Sigmoid colon (tissue), 7 donors: ENCODE measurements at regions of chr4 and their contacts with region 1.

Region 1: GRCh38 chr4:144174401-144175067 is 34.0 kb upstream of the GYPA start:
- DNase-seq: no peak
- H3K4me3 ChIP-seq: no peak overlapping the region
- H3K27ac ChIP-seq: no peak overlapping the region
- H3K4me1 ChIP-seq: peaks cover 0 to 4% (median 2%) of the 10 kb centered on the region in 4 donors
- H3K27me3 ChIP-seq: no peaks in the 10 kb centered on the region
- CTCF ChIP-seq: peak in 2 of 4 experiments; percentile 24 to 43
- EP300 ChIP-seq: no peak
- POLR2A ChIP-seq: no peak

Region 2: DNA sequence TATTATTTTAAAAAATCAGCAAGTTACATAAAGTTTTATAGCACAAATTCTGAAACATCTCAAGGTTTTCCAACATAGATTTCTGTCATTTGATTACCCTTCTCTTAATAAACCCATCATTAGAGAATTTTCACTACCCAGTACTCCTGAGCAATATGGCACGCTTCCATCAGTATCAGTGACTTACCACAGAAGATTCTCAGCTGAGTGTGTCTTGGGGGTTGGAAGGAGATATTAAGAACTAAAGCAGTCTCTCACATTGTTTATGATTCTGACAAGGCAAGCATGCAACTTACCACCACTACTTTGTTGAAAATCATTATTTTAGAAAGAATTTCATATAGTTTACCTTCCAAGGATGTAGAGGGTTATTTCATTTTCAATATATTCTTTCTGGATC is 1396.1 kb before region 1 on chr4:
- intact Hi-C with region 1: no loop called
- DNase-seq: no peak
- H3K4me3 ChIP-seq: no peak overlapping the region
- H3K27ac ChIP-seq: no peak overlapping the region
- H3K4me1 ChIP-seq: peaks cover 0 to 15% (median 10%) of the 10 kb centered on the region in 4 donors
- H3K27me3 ChIP-seq: no peaks in the 10 kb centered on the region
- CTCF ChIP-seq: no peak
- EP300 ChIP-seq: no peak
- POLR2A ChIP-seq: no peak

Region 3: DNA sequence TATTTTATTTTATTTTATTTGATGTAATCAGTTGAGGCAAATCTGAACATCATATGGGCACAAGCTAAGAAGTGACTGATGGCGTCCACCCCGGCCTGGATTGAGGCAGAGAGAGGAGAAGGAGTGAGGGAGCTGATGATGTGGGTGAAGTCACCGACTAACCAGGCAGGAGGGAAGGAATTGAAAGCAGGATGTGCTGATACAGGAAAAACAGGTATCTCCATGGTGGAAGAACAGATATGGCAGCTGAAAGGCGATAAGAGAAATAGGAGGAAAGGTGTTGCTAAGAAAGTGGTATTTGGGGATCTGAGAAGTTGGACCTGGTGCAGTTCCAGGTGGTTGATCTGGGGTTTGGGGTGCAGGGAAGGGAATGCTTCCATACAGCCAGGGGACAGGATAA is 117.7 kb before region 1 on chr4:
- intact Hi-C with region 1: no loop called
- DNase-seq: no peak
- H3K4me3 ChIP-seq: no peak overlapping the region
- H3K27ac ChIP-seq: no peak overlapping the region
- H3K4me1 ChIP-seq: no peaks in the 10 kb centered on the region
- H3K27me3 ChIP-seq: no peaks in the 10 kb centered on the region
- CTCF ChIP-seq: no peak
- EP300 ChIP-seq: no peak
- POLR2A ChIP-seq: no peak

Region 4: GRCh38 chr4:144189121-144189520 is 14.6 kb after region 1 on chr4:
- intact Hi-C with region 1: loop called (anchors 1 kb)
- DNase-seq: no peak
- H3K4me3 ChIP-seq: no peak overlapping the region
- H3K27ac ChIP-seq: no peak overlapping the region
- H3K4me1 ChIP-seq: peaks cover 0 to 6% (median 2%) of the 10 kb centered on the region in 4 donors
- H3K27me3 ChIP-seq: no peaks in the 10 kb centered on the region
- CTCF ChIP-seq: no peak
- EP300 ChIP-seq: no peak
- POLR2A ChIP-seq: no peak

Region 5: GRCh38 chr4:145061318-145061920 is 886.9 kb after region 1 on chr4:
- intact Hi-C with region 1: loop called (anchors 2 kb)
- DNase-seq: no peak
- H3K4me3 ChIP-seq: no peak overlapping the region
- H3K27ac ChIP-seq: no peak overlapping the region
- H3K4me1 ChIP-seq: peaks cover 0 to 18% (median 0%) of the 10 kb centered on the region in 4 donors
- H3K27me3 ChIP-seq: no peaks in the 10 kb centered on the region
- CTCF ChIP-seq: peak in 3 of 4 experiments; percentile 20 to 43 (median 24)
- EP300 ChIP-seq: no peak
- POLR2A ChIP-seq: no peak